Activated CD4-positive, alpha-beta memory T cell treated with anti-CD3 and anti-CD28 coated beads for 36 hours (primary cell): ENCODE measurements at regions of chr9 and their contacts with region 1.

Region 1: GRCh38 chr9:133133681-133134418 is 12.8 kb upstream of the RALGDS start:
- DNase-seq: peak; percentile 96
- H3K4me3 Mint-ChIP-seq: peak overlapping the region; percentile 70
- H3K27ac Mint-ChIP-seq: peak overlapping the region; percentile 100
- H3K4me1 Mint-ChIP-seq: peaks cover 79% of the 10 kb centered on the region
- H3K27me3 Mint-ChIP-seq: no peaks in the 10 kb centered on the region

Region 2: GRCh38 chr9:132169672-132170392 is 964.0 kb before region 1 on chr9:
- CTCF ChIA-PET with region 1: no interaction called
- POLR2A ChIA-PET with region 1: no interaction called
- intact Hi-C with region 1: no loop called
- DNase-seq: peak; percentile 64
- H3K4me3 Mint-ChIP-seq: no peak overlapping the region
- H3K27ac Mint-ChIP-seq: no peak overlapping the region
- H3K4me1 Mint-ChIP-seq: no peaks in the 10 kb centered on the region
- H3K27me3 Mint-ChIP-seq: peaks cover 40% of the 10 kb centered on the region

Region 3: GRCh38 chr9:133054966-133055365 is 78.9 kb before region 1 on chr9:
- CTCF ChIA-PET with region 1: no interaction called
- POLR2A ChIA-PET with region 1: no interaction called
- intact Hi-C with region 1: no loop called
- DNase-seq: no peak
- H3K4me3 Mint-ChIP-seq: no peak overlapping the region
- H3K27ac Mint-ChIP-seq: no peak overlapping the region
- H3K4me1 Mint-ChIP-seq: peaks cover 28% of the 10 kb centered on the region
- H3K27me3 Mint-ChIP-seq: no peaks in the 10 kb centered on the region

Region 4: GRCh38 chr9:133075925-133076630 is 57.8 kb before region 1 on chr9:
- CTCF ChIA-PET with region 1: no interaction called
- POLR2A ChIA-PET with region 1: no interaction called
- intact Hi-C with region 1: no loop called
- DNase-seq: no peak
- H3K4me3 Mint-ChIP-seq: no peak overlapping the region
- H3K27ac Mint-ChIP-seq: no peak overlapping the region
- H3K4me1 Mint-ChIP-seq: no peaks in the 10 kb centered on the region
- H3K27me3 Mint-ChIP-seq: no peaks in the 10 kb centered on the region

Region 5: GRCh38 chr9:133115448-133116345 is 18.2 kb before region 1 on chr9:
- CTCF ChIA-PET with region 1: interaction called, 4 read pairs
- POLR2A ChIA-PET with region 1: interaction called, 27 read pairs
- intact Hi-C with region 1: loop called (anchors 1 kb)
- DNase-seq: peak; percentile 89
- H3K4me3 Mint-ChIP-seq: peak overlapping the region; percentile 56
- H3K27ac Mint-ChIP-seq: peak overlapping the region; percentile 91
- H3K4me1 Mint-ChIP-seq: peaks cover 68% of the 10 kb centered on the region
- H3K27me3 Mint-ChIP-seq: no peaks in the 10 kb centered on the region

Region 6: GRCh38 chr9:133121198-133121939 is 12.5 kb before region 1 on chr9 and contains the start of gene RALGDS:
- CTCF ChIA-PET with region 1: interaction called, 3 read pairs
- POLR2A ChIA-PET with region 1: interaction called, 27 read pairs
- intact Hi-C with region 1: loop called (anchors 1 kb)
- DNase-seq: peak; percentile 93
- H3K4me3 Mint-ChIP-seq: peak within 1 kb of the TSS; percentile 77
- H3K27ac Mint-ChIP-seq: peak within 1 kb of the TSS; percentile 85
- H3K4me1 Mint-ChIP-seq: peaks cover 68% of the 10 kb centered on the region
- H3K27me3 Mint-ChIP-seq: no peaks in the 10 kb centered on the region
- total RNA-seq, gene RALGDS: 65.4 TPM

Region 7: DNA sequence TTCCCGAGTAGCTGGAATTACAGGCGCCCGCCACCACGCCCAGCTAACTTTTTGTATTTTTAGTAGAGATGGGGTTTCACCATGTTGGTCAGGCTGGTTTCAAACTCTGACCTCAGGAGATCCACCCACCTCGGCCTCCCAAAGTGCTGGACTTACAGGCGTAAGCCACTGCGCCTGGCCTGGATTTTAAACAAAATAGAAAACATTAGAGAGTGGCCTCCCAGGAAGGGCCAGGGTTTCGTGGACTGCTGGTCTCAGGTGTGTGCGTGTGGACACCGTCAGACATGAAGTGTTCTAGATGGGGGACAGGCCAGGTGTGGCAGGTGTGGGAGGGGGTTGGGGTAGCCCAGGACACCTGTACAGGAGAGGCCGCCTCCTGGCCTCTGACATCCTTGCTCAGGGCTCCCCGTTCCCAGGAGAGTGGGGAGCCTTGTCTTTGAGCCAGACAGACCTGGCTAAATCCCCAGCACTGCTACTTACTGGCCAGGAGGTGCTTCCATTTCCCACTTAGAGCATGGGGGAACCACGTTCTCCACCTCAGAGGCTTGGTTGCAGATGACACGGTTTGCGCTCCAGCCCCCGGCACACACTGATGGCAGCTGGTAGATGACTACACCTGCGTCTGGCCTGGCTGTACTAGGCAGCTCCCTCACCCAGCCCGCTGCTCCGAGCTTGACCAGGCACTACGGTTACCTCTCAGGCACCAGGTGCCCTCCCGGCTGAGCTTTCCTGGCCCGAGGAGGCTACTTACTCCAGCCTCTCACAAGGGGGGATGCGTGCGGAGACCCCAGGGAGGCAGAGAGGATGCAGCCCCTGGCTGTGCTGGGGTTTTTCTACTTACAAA is 37.1 kb after region 1 on chr9:
- CTCF ChIA-PET with region 1: no interaction called
- POLR2A ChIA-PET with region 1: no interaction called
- intact Hi-C with region 1: no loop called
- DNase-seq: no peak
- H3K4me3 Mint-ChIP-seq: no peak overlapping the region
- H3K27ac Mint-ChIP-seq: no peak overlapping the region
- H3K4me1 Mint-ChIP-seq: no peaks in the 10 kb centered on the region
- H3K27me3 Mint-ChIP-seq: peaks cover 2% of the 10 kb centered on the region